ENCODE measurements at regions of chr9 and their contacts with region 1.

Region 1: GRCh38 chr9:68669218-68669617 is 35.8 kb upstream of the PIP5K1B start:
- DNase-seq: no peak
- H3K4me3 ChIP-seq: no peak overlapping the region
- H3K27ac ChIP-seq: no peak overlapping the region
- H3K27me3 ChIP-seq: peaks cover 0 to 3% (median 0%) of the 10 kb centered on the region in 45 donors
- CTCF ChIP-seq: no peak

Region 2: DNA sequence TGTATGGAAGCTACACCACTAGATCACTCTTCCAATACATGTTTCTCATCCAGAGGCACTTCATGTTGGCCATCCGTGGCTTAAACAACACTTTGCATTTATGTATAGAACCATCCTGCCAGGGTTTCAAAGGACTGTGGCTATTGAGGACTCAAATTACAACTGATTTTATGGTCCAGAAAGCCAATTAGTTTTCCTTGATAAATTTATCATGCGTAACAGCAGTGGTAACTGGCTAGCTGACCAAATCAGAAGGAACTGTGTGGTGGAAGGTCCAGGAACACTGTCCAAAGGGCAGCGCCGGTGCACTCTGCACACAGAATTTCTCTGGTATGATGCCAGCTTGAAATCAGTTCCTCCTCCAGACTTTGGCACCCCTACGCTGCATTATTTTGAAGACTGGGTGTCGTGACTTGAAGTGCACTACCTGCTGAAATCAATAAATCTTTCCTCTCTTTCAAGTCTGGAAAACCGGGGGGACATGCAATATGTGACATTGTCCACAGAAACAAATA is 59.3 kb before region 1 on chr9:
- intact Hi-C with region 1: loop called in 1 of 2 experiments (anchors 10 kb)
- DNase-seq: no peak
- H3K4me3 ChIP-seq: no peak overlapping the region
- H3K27ac ChIP-seq: no peak overlapping the region
- H3K27me3 ChIP-seq: no peaks in the 10 kb centered on the region
- CTCF ChIP-seq: no peak